H1 (cell line): ENCODE measurements at regions of chr17 and their contacts with region 1.

Region 1: DNA sequence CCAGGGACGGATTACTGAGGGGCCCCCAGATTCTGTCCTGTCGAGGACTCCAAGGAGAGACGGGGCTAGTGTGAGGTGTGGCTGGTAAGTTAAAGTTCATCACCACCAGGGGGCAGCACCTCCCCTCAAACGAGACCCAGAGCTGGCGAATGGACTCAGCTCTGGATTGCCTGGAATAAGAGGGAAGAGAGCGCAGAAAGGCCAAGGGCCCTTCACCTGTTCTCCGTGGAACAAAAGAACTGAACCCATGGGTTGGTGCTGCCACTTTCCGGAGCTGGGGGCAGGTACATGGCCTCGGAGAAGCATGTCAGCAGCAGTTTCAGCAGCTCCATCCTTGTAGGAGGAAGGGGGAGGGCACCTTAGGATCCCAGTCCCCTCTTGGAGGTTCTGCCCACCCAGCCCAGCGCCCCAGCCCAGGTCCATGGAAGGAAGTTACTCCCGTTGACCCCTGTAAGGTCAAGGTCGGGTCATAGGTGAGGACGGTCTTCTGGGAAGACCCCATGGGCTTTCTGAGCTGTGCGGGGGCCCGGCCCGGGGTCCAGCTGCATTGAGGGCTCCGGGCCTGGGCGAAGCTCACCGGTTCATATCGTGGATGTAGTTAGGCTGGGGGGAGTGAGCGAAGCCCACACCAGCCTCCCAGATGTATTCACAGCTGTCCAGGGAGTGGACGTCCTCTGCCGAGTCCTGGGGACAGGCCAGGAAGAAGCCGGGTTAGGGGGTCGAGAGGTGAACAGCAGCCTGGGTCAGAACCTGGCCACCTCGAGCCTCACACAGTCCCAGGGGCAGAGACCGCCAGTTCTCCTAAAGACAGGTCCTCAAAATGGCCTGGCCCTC is 10.7 kb downstream of the HID1 start:
- DNase-seq: peak; percentile 70 to 97
- H3K4me3 ChIP-seq: no peak overlapping the region
- H3K27ac ChIP-seq: no peak overlapping the region
- H3K4me1 ChIP-seq: peaks cover 0 to 7% (median 1%) of the 10 kb centered on the region in 4 experiments; a peak in 4 of 7 replicates
- H3K27me3 ChIP-seq: peaks cover 0 to 5% (median 2%) of the 10 kb centered on the region in 4 experiments; a peak in 3 of 7 replicates
- CTCF ChIP-seq: peak; percentile 79 to 83 (median 82)
- EP300 ChIP-seq: no peak
- POLR2A ChIP-seq: no peak
- RAD21 ChIP-seq: peak; percentile 88 to 91

Region 2: GRCh38 chr17:74780443-74781238 is 181.2 kb before region 1 on chr17:
- CTCF ChIA-PET with region 1: no interaction called
- POLR2A ChIA-PET with region 1: no interaction called
- DNase-seq: no peak
- H3K4me3 ChIP-seq: no peak overlapping the region
- H3K27ac ChIP-seq: no peak overlapping the region
- H3K4me1 ChIP-seq: peaks cover 0 to 9% (median 4%) of the 10 kb centered on the region in 4 experiments; a peak in 5 of 7 replicates
- H3K27me3 ChIP-seq: no peaks in the 10 kb centered on the region
- CTCF ChIP-seq: peak; percentile 62 to 92 (median 70)
- EP300 ChIP-seq: no peak
- POLR2A ChIP-seq: no peak
- RAD21 ChIP-seq: peak; percentile 56 to 65

Region 3: DNA sequence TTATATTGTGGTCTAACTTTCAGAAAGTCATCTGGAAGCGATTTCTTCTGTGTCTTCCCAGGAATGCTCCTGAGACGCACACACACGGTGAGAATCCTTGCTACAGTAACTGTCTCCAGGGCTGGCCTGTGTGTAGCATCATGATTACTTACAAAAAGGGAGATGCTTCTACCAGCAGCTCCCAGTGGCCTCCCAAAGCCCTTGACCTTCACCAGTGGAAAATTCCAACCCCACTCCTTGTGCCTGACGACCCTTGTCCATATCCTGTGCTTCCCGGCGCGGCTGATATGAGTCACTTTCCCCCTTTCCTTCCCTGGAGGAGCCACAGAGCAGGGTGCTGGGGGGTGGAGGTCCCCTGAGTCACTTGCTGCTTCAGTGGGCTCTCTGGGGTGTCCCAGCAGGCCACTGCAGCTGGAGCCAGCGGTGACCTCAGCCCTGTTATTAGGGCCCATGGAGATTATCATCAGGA is 163.6 kb before region 1 on chr17:
- CTCF ChIA-PET with region 1: no interaction called
- POLR2A ChIA-PET with region 1: no interaction called
- DNase-seq: no peak
- H3K4me3 ChIP-seq: no peak overlapping the region
- H3K27ac ChIP-seq: no peak overlapping the region
- H3K4me1 ChIP-seq: no peaks in the 10 kb centered on the region
- H3K27me3 ChIP-seq: no peaks in the 10 kb centered on the region
- CTCF ChIP-seq: no peak
- EP300 ChIP-seq: no peak
- POLR2A ChIP-seq: no peak
- RAD21 ChIP-seq: no peak

Region 4: DNA sequence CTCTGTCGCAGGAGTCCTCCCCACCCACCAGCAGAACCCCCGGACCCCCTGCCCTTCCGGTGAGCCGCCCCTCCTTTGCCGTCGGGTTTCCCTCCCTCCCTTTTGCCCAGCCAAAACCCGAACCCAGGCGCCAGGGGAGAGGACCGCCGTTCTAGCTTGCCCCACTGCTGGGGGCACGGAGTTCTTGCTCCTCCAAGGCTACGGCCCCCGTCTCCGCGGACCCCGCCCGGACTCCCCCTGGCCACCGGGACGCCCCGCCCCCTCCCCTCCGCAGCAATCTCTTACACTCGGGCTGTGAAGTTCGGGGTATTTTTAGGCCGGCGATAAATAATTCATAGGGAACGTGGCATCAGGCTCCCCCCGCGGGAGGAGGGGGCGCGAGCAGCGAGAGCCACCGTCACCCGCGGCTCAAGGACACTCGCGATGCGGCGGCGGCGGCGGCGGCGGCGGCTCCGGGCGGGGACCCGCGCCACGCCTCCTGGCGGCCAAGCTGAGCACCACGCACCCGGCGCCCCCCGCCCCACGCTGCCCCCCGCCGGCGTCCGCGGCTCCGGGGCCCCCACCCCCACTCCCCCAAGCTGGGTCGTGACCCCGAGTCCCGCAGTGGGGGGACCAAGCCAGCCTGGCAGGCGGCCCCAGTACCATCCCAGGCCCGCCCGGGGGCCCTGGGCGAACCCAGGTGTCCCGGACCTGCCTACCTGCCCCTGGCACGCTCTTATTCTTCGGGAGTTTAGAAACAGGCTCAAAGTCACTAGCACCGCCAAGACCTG is 102.2 kb before region 1 on chr17 and contains the start of gene GRIN2C:
- CTCF ChIA-PET with region 1: interaction called, 55 read pairs
- POLR2A ChIA-PET with region 1: no interaction called
- DNase-seq: peak in 1 of 2 experiments; percentile 69
- H3K4me3 ChIP-seq: peak within 1 kb of the TSS; percentile 21 to 60 (median 31); a peak in 6 of 8 replicates
- H3K27ac ChIP-seq: no peak within 1 kb of the TSS
- H3K4me1 ChIP-seq: peaks cover 0 to 7% (median 5%) of the 10 kb centered on the region in 4 experiments; a peak in 4 of 7 replicates
- H3K27me3 ChIP-seq: peaks cover 52 to 72% (median 64%) of the 10 kb centered on the region in 4 experiments
- CTCF ChIP-seq: peak; percentile 7 to 62 (median 25); a peak in 2 of 4 replicates
- EP300 ChIP-seq: no peak
- POLR2A ChIP-seq: no peak
- RAD21 ChIP-seq: no peak
- total RNA-seq, gene GRIN2C: 0.07 TPM in 1 of 2 replicates, not detected in the other

Region 5: DNA sequence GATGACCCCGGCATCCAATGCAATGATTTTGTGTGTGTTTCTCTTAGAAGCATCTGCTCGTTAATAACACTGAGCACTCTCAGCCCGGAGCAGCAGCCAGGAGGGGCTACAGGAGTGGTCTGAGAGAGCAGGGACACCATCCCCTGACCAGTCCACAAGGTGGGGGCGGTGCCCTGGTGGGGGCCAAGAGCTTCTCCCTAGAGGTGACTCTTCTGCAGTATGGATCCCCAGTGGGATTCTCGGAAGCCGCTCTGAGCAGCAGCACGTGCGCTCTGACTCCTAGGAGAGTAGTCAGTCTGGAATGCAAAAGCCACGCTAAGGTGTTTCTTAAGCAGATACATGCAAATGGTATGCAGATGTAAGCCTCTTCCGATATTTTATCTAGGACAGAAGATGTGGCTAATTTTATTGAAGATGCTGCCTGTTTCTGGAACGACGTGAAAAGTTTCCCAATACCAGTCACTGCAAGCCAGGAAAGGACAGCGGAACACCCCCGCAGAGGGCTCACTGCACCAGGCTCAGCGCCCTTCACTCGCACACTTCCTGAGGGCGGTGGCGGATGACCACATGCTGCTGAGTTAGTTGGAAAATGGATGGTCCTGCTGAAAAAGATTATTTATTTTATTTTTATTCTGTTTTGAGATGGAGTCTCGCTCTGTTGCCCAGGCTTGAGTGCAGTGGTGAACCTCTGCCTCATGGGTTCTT is 78.7 kb before region 1 on chr17:
- CTCF ChIA-PET with region 1: interaction called, 20 read pairs
- POLR2A ChIA-PET with region 1: no interaction called
- DNase-seq: no peak
- H3K4me3 ChIP-seq: no peak overlapping the region
- H3K27ac ChIP-seq: no peak overlapping the region
- H3K4me1 ChIP-seq: peaks cover 3 to 8% (median 5%) of the 10 kb centered on the region in 4 experiments; a peak in 6 of 7 replicates
- H3K27me3 ChIP-seq: peaks cover 0 to 2% (median 0%) of the 10 kb centered on the region in 4 experiments; a peak in 2 of 7 replicates
- CTCF ChIP-seq: no peak
- EP300 ChIP-seq: no peak
- POLR2A ChIP-seq: no peak
- RAD21 ChIP-seq: no peak

Region 6: GRCh38 chr17:74972107-74972972 is 10.5 kb after region 1 on chr17 and contains the start of gene HID1:
- CTCF ChIA-PET with region 1: interaction called, 89 read pairs
- POLR2A ChIA-PET with region 1: interaction called, 6 read pairs
- DNase-seq: peak in 1 of 2 experiments; percentile 91
- H3K4me3 ChIP-seq: peak within 1 kb of the TSS; percentile 62 to 92 (median 62)
- H3K27ac ChIP-seq: no peak within 1 kb of the TSS
- H3K4me1 ChIP-seq: peaks cover 0 to 15% (median 9%) of the 10 kb centered on the region in 4 experiments; a peak in 6 of 7 replicates
- H3K27me3 ChIP-seq: peaks cover 17 to 43% (median 37%) of the 10 kb centered on the region in 4 experiments
- CTCF ChIP-seq: no peak
- EP300 ChIP-seq: no peak
- POLR2A ChIP-seq: no peak
- RAD21 ChIP-seq: no peak
- total RNA-seq, gene HID1: 13.8 and 15.1 TPM in 2 replicates

Region 7: GRCh38 chr17:74994476-74994875 is 32.6 kb after region 1 on chr17:
- CTCF ChIA-PET with region 1: interaction called, 345 read pairs
- POLR2A ChIA-PET with region 1: no interaction called
- DNase-seq: no peak
- H3K4me3 ChIP-seq: no peak overlapping the region
- H3K27ac ChIP-seq: no peak overlapping the region
- H3K4me1 ChIP-seq: no peaks in the 10 kb centered on the region
- H3K27me3 ChIP-seq: no peaks in the 10 kb centered on the region
- CTCF ChIP-seq: no peak
- EP300 ChIP-seq: no peak
- POLR2A ChIP-seq: no peak
- RAD21 ChIP-seq: no peak

Region 8: DNA sequence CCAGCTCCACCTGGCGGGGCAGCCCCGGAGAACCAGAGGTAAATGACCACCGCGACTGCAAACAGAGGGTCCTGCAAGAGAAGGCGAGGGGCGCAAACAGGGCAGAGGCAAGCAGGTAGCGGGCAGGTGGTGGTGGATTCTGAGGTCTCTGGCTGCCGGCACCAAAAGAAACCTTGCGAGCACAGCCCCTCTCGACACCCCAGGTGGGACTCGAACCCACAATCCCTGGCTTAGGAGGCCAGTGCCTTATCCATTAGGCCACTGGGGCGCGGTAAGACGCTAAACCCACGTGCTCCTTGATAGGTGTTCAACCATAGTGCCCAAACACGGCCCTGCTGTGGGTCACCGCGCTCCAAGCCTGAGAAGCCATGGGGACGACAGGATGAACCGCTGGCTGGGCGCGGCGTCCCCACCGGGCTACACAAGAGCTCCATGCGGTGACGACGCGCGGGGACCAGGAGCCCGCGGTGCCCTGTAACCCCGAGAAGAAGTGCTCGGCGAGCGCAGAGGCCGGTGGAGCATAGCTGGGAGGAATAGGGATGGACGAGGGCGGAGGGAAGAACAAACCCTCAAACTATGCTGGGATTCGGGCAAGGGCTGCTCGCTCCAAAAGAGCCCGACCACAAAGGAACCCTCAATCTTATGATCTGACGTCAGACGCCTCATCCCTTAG is 72.5 kb after region 1 on chr17:
- CTCF ChIA-PET with region 1: interaction called, 28 read pairs
- POLR2A ChIA-PET with region 1: interaction called, 3 read pairs
- DNase-seq: peak; percentile 87 to 97
- H3K4me3 ChIP-seq: peak overlapping the region; percentile 82 to 98 (median 95)
- H3K27ac ChIP-seq: peak overlapping the region; percentile 89
- H3K4me1 ChIP-seq: peaks cover 3 to 10% (median 7%) of the 10 kb centered on the region in 4 experiments; a peak in 5 of 7 replicates
- H3K27me3 ChIP-seq: no peaks in the 10 kb centered on the region
- CTCF ChIP-seq: peak in 1 of 3 experiments; percentile 5; a peak in 1 of 4 replicates
- EP300 ChIP-seq: no peak
- POLR2A ChIP-seq: peak; percentile 41 to 43; a peak in 2 of 3 replicates
- RAD21 ChIP-seq: no peak